ENCODE measurements at regions of chr1 and their contacts with region 1.

Region 1: GRCh38 chr1:157193702-157194391 is 55.7 kb upstream of the ETV3 start:
- DNase-seq: peak in 1 of 2 experiments; percentile 56
- H3K4me3 ChIP-seq: no peak overlapping the region
- H3K27ac ChIP-seq: no peak overlapping the region
- H3K4me1 ChIP-seq: no peaks in the 10 kb centered on the region
- H3K27me3 ChIP-seq: peaks cover 68% of the 10 kb centered on the region
- CTCF ChIP-seq: peak; percentile 79

Region 2: GRCh38 chr1:157117527-157118057 is 76.3 kb before region 1 on chr1:
- CTCF ChIA-PET with region 1: no interaction called
- POLR2A ChIA-PET with region 1: no interaction called
- intact Hi-C with region 1: no loop called
- DNase-seq: no peak
- H3K4me3 ChIP-seq: no peak overlapping the region
- H3K27ac ChIP-seq: no peak overlapping the region
- H3K4me1 ChIP-seq: no peaks in the 10 kb centered on the region
- H3K27me3 ChIP-seq: no peaks in the 10 kb centered on the region
- CTCF ChIP-seq: no peak

Region 3: DNA sequence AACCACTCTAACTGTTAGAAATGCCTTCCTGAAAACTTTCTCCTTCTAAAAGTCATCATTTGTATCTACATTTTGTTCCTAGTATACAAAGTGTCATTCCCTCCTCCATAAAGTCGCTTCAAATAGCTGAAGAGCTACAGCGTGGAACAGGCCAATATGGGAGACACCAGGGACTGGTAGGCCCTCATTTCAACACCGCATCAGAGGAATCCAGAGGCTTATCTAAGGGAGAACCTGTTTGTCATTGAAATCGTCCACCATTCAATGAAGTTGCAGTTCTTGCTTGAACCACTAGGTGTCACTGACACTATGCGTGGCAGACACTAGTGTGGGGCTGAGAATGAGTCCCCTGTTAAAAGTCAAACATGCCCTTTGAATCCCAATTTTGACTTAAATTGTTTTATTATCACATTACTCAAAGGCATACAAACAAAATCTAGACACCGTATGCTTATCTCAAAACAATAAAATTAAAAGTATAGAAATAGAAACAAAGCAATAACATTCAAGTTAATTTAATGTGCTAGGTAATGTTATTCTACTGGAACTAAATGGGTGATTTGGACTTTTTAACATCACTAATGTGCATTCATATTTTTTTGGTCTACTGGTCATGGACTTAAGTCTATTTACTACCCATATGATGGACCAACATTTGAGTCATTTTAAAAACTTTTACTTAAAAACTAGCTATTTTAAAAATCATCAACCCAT is 176.1 kb after region 1 on chr1:
- CTCF ChIA-PET with region 1: no interaction called
- POLR2A ChIA-PET with region 1: no interaction called
- intact Hi-C with region 1: loop called (anchors 10 kb)
- DNase-seq: peak; percentile 20 to 46
- H3K4me3 ChIP-seq: no peak overlapping the region
- H3K27ac ChIP-seq: no peak overlapping the region
- H3K4me1 ChIP-seq: no peaks in the 10 kb centered on the region
- H3K27me3 ChIP-seq: peaks cover 9% of the 10 kb centered on the region
- CTCF ChIP-seq: peak; percentile 93